CD4-positive, alpha-beta memory T cell (primary cell): ENCODE measurements at regions of chr1 and their contacts with region 1.

Region 1: DNA sequence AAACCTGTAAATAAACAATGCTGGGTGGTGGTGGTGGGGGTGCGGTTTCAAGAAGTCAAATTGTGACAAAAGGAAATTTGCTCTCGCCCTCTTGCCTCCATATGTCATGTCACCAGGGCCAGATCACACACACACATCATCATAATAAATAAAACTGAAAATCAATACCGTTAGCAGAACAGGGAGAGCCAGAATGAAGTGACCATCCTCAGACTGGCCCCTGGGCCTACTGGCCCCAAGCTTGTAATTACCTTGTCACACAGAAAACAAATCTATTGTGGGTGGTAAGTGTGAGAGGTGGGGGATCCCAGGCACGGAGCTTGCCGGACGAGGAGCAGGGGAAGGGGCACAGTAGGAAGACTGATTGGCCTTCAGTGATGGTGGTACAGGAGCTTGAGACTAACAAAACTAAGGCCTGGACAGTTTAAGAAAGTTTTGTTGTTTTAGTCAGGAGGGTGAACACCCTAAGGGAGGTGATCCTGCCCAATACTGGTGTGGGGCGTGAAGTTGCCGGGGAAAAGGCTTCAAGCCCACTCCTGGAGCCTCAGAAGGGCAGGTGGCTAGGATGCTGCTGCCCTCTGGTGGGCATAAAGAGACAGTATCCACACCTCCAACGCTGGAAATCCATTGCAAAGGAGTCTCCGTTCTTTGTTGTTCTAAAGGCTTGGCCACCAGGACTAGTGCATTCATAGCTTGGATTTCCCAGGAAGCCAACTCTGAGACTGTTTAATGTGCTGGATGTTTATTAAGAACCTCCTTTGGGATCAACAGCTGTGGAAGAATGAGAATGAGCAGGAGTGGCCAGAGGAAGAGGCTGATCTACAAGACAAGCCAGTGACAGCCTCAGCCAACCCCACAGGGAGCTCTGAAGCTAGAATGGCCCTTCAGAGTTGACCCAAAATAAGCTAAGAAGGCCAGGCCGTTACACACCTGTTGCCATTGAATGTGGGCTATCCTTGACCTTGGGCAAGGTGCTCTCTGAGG is 8.1 kb upstream of the C1orf216 start:
- DNase-seq: peak; percentile 43 to 59 (median 57)
- H3K4me3 ChIP-seq: no peak overlapping the region
- H3K4me3 Mint-ChIP-seq: no peak overlapping the region
- H3K27ac ChIP-seq: no peak overlapping the region
- H3K27ac Mint-ChIP-seq: peak overlapping the region in 2 of 7 donors; percentile 35 to 37
- H3K4me1 ChIP-seq: peaks cover 4% of the 10 kb centered on the region
- H3K4me1 Mint-ChIP-seq: peaks cover 0 to 6% (median 4%) of the 10 kb centered on the region in 4 donors
- H3K27me3 ChIP-seq: no peaks in the 10 kb centered on the region
- H3K27me3 Mint-ChIP-seq: no peaks in the 10 kb centered on the region

Region 2: DNA sequence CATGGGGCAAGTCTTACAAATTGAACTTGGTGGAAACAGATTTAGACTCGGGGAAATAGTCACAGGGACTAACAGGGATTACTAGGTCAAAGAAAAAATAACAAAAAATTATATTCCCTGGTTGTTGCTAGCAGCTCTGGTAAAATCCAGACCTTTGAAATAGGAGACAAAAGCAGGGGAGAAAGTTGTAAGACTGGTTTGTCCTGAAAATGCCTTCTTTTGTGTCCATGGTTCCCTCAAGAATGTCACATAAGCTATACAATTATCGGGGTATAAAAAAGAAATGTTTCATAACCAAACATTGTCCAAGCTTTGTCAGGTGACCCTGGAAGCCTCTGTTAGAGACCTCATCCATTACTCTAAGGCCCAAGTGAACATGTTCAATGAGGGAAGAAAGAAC is 202.6 kb before region 1 on chr1:
- CTCF ChIA-PET with region 1: no interaction called
- POLR2A ChIA-PET with region 1: no interaction called
- intact Hi-C with region 1: no loop called
- DNase-seq: no peak
- H3K4me3 ChIP-seq: no peak overlapping the region
- H3K4me3 Mint-ChIP-seq: no peak overlapping the region
- H3K27ac ChIP-seq: no peak overlapping the region
- H3K27ac Mint-ChIP-seq: peak overlapping the region in 3 of 7 donors; percentile 8 to 36 (median 21)
- H3K4me1 ChIP-seq: peaks cover 7% of the 10 kb centered on the region
- H3K4me1 Mint-ChIP-seq: peaks cover 12 to 28% (median 19%) of the 10 kb centered on the region in 4 donors
- H3K27me3 ChIP-seq: no peaks in the 10 kb centered on the region
- H3K27me3 Mint-ChIP-seq: no peaks in the 10 kb centered on the region

Region 3: DNA sequence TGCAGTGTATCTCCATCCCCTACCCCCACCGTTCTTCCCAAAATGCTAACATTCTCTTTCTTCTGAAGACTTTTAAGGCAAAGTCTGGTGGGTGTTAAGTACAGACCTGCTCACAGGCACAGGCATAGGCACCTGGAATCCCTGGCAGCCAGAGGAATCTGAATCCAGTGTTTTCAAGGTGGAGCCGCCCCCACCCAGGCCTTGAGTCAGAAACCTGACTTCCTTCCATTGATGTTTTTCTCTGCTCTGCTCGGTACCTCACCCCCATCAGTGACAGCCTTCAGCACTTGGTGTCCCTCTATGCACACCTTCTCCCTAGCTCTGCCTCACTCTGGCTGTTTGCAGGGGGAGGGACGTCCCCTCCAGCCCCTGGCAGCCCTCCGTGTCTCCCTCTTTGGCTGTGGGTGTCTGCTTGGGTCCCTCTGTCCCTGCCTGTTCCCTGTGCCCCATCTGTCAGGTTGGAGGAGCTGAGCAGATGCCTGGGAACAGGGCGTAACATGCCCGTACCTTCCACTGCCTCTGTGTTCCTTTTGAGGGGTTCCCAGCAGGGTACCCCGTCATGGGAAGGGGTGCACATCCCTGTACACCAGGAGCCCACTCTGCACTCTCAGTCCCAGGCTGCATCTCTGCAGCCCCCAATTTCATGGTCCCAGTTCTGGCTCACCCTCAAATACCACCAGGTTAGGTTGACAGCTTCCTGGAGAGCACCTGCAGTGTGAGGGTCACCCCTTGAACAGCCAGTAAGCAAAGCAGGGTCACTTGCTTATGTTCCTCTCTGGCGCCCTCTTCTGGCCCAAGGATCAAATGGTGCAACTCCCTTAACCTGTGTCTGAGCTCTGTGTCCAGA is 162.5 kb before region 1 on chr1:
- CTCF ChIA-PET with region 1: interaction called, 178 read pairs
- POLR2A ChIA-PET with region 1: interaction called, 4 read pairs
- intact Hi-C with region 1: loop called (anchors 1 kb)
- DNase-seq: peak; percentile 70 to 78 (median 74)
- H3K4me3 ChIP-seq: no peak overlapping the region
- H3K4me3 Mint-ChIP-seq: peak overlapping the region in 1 of 8 donors; percentile 0
- H3K27ac ChIP-seq: no peak overlapping the region
- H3K27ac Mint-ChIP-seq: peak overlapping the region; percentile 68 to 93 (median 70)
- H3K4me1 ChIP-seq: peaks cover 3% of the 10 kb centered on the region
- H3K4me1 Mint-ChIP-seq: peaks cover 17 to 41% (median 24%) of the 10 kb centered on the region in 4 donors
- H3K27me3 ChIP-seq: no peaks in the 10 kb centered on the region
- H3K27me3 Mint-ChIP-seq: no peaks in the 10 kb centered on the region

Region 4: DNA sequence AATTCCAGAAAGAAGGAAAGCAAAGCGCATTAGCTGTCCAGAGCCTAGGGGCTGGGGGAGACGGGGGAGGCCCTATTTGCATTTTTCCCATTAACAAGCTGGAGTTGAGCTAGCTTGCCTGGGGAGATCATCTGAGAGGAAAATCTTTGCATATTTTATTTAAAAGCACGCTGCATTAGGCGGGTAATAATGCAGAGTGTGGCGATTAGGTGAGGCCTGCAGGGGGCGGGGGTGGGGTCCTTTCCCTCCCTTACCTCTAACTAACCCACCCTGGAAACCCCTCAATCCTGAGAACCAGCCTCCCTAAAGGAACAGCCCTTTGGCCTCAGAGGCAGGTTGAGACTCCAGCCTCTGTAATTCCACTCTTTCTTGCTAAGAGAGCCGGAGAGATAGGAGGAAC is 24.2 kb before region 1 on chr1:
- CTCF ChIA-PET with region 1: interaction called, 15 read pairs
- POLR2A ChIA-PET with region 1: no interaction called
- intact Hi-C with region 1: no loop called
- DNase-seq: no peak
- H3K4me3 ChIP-seq: no peak overlapping the region
- H3K4me3 Mint-ChIP-seq: no peak overlapping the region
- H3K27ac ChIP-seq: no peak overlapping the region
- H3K27ac Mint-ChIP-seq: no peak overlapping the region
- H3K4me1 ChIP-seq: peaks cover 6% of the 10 kb centered on the region
- H3K4me1 Mint-ChIP-seq: peaks cover 6 to 10% (median 8%) of the 10 kb centered on the region in 4 donors
- H3K27me3 ChIP-seq: peaks cover 9% of the 10 kb centered on the region
- H3K27me3 Mint-ChIP-seq: peaks cover 43 to 48% of the 10 kb centered on the region in 2 donors

Region 5: DNA sequence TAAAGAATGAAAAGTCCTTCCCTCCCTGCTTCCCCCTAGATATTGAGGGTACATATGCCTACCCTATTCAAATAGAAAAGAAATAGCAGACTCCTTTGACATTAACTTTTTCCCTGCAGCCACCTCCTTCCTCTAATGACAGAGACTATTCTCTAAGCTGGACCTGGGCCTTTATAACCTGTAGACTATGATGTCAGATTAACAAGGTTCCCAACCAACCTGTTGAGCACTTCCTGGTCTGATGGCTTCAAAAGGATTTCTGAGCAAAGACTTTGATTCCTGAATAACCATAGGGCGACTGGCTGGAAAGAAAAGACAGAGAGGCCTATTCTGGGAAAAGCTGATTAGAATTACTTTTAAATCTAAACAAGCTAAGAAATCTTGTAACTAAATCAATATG is 10.4 kb after region 1 on chr1:
- CTCF ChIA-PET with region 1: interaction called, 30 read pairs
- POLR2A ChIA-PET with region 1: no interaction called
- intact Hi-C with region 1: no loop called
- DNase-seq: no peak
- H3K4me3 ChIP-seq: no peak overlapping the region
- H3K4me3 Mint-ChIP-seq: no peak overlapping the region
- H3K27ac ChIP-seq: no peak overlapping the region
- H3K27ac Mint-ChIP-seq: peak overlapping the region in 3 of 7 donors; percentile 18 to 42 (median 36)
- H3K4me1 ChIP-seq: no peaks in the 10 kb centered on the region
- H3K4me1 Mint-ChIP-seq: no peaks in the 10 kb centered on the region
- H3K27me3 ChIP-seq: no peaks in the 10 kb centered on the region
- H3K27me3 Mint-ChIP-seq: no peaks in the 10 kb centered on the region

Region 6: GRCh38 chr1:35753626-35754260 is 27.0 kb after region 1 on chr1:
- CTCF ChIA-PET with region 1: interaction called, 12 read pairs
- POLR2A ChIA-PET with region 1: no interaction called
- intact Hi-C with region 1: no loop called
- DNase-seq: no peak
- H3K4me3 ChIP-seq: no peak overlapping the region
- H3K4me3 Mint-ChIP-seq: no peak overlapping the region
- H3K27ac ChIP-seq: no peak overlapping the region
- H3K27ac Mint-ChIP-seq: no peak overlapping the region
- H3K4me1 ChIP-seq: no peaks in the 10 kb centered on the region
- H3K4me1 Mint-ChIP-seq: peaks cover 0 to 2% (median 0%) of the 10 kb centered on the region in 4 donors
- H3K27me3 ChIP-seq: no peaks in the 10 kb centered on the region
- H3K27me3 Mint-ChIP-seq: no peaks in the 10 kb centered on the region

Region 7: GRCh38 chr1:35777109-35777508 is 50.4 kb after region 1 on chr1:
- CTCF ChIA-PET with region 1: interaction called, 32 read pairs
- POLR2A ChIA-PET with region 1: no interaction called
- intact Hi-C with region 1: loop called (anchors 1 kb)
- DNase-seq: peak in 2 of 5 donors; percentile 6 to 8
- H3K4me3 ChIP-seq: no peak overlapping the region
- H3K4me3 Mint-ChIP-seq: peak overlapping the region in 5 of 8 donors; percentile 2 to 26 (median 15)
- H3K27ac ChIP-seq: no peak overlapping the region
- H3K27ac Mint-ChIP-seq: peak overlapping the region; percentile 27 to 88 (median 81)
- H3K4me1 ChIP-seq: peaks cover 24% of the 10 kb centered on the region
- H3K4me1 Mint-ChIP-seq: peaks cover 11 to 32% (median 15%) of the 10 kb centered on the region in 4 donors
- H3K27me3 ChIP-seq: no peaks in the 10 kb centered on the region
- H3K27me3 Mint-ChIP-seq: no peaks in the 10 kb centered on the region

Region 8: DNA sequence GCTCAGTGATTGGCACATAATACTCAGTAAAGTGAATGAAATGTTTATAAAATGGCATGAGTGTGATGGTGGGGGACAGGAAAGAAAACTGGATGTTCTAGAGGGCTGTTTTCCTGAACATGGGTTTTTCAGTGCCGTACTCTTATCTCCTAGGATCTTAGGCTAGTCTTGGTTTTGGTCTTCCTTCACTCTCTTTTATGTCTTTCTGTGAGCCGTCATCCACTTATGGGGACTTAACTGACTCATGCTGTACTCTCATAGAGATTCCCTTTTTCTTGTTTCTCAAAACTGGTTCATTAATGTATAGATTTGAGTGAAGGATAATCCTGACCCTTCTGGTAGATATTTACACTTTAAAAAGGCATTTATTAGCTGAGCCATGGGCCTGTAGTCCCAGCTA is 220.8 kb after region 1 on chr1:
- CTCF ChIA-PET with region 1: no interaction called
- POLR2A ChIA-PET with region 1: no interaction called
- intact Hi-C with region 1: no loop called
- DNase-seq: no peak
- H3K4me3 ChIP-seq: no peak overlapping the region
- H3K4me3 Mint-ChIP-seq: no peak overlapping the region
- H3K27ac ChIP-seq: no peak overlapping the region
- H3K27ac Mint-ChIP-seq: peak overlapping the region in 1 of 7 donors; percentile 1
- H3K4me1 ChIP-seq: peaks cover 16% of the 10 kb centered on the region
- H3K4me1 Mint-ChIP-seq: peaks cover 15 to 34% (median 23%) of the 10 kb centered on the region in 4 donors
- H3K27me3 ChIP-seq: no peaks in the 10 kb centered on the region
- H3K27me3 Mint-ChIP-seq: no peaks in the 10 kb centered on the region